T-cell (primary cell): ENCODE measurements at regions of chr3 and their contacts with region 1.

Region 1: GRCh38 chr3:10263646-10264363 is 15.5 kb downstream of the TATDN2 start:
- DNase-seq: peak; percentile 32 to 79 (median 64)
- ATAC-seq: peak; percentile 95 to 97 (median 96)
- H3K4me3 ChIP-seq: peak overlapping the region; percentile 11 to 23
- H3K4me3 Mint-ChIP-seq: peak overlapping the region; percentile 64 to 81 (median 78)
- H3K27ac ChIP-seq: peak overlapping the region; percentile 40
- H3K27ac Mint-ChIP-seq: peak overlapping the region; percentile 94 to 97
- H3K4me1 ChIP-seq: peaks cover 28 to 57% of the 10 kb centered on the region in 2 experiments
- H3K4me1 Mint-ChIP-seq: peaks cover 86 to 90% (median 87%) of the 10 kb centered on the region in 3 donors
- H3K27me3 ChIP-seq: no peaks in the 10 kb centered on the region
- H3K27me3 Mint-ChIP-seq: no peaks in the 10 kb centered on the region

Region 2: DNA sequence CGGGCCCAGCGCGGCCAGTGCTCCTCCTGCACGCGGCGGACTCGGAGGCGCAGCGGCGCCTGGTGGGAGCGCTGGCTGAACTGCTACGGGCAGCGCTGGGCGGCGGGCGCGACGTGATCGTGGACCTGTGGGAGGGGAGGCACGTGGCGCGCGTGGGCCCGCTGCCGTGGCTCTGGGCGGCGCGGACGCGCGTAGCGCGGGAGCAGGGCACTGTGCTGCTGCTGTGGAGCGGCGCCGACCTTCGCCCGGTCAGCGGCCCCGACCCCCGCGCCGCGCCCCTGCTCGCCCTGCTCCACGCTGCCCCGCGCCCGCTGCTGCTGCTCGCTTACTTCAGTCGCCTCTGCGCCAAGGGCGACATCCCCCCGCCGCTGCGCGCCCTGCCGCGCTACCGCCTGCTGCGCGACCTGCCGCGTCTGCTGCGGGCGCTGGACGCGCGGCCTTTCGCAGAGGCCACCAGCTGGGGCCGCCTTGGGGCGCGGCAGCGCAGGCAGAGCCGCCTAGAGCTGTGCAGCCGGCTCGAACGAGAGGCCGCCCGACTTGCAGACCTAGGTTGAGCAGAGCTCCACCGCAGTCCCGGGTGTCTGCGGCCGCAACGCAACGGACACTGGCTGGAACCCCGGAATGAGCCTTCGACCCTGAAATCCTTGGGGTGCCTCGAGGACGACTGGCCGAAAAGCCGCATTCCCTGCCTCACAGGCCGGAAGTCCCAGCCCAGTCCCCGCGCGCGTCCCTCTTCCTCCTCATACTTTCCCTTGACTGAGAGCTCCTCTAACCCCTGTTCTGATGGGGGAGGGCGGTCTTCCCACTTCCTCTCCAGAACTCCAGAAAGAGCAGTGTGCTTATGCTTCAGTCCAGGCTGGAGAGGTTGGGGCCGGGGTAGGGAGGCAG is 348.3 kb before region 1 on chr3:
- CTCF ChIA-PET with region 1: no interaction called
- POLR2A ChIA-PET with region 1: interaction called in 1 of 2 experiments, 13 read pairs
- DNase-seq: peak in 11 of 35 experiments; percentile 7 to 47 (median 23)
- ATAC-seq: peak; percentile 41 to 62 (median 58)
- H3K4me3 ChIP-seq: peak overlapping the region; percentile 51 to 83
- H3K4me3 Mint-ChIP-seq: peak overlapping the region; percentile 70 to 73 (median 71)
- H3K27ac ChIP-seq: no peak overlapping the region
- H3K27ac Mint-ChIP-seq: no peak overlapping the region
- H3K4me1 ChIP-seq: peaks cover 3 to 32% of the 10 kb centered on the region in 2 experiments
- H3K4me1 Mint-ChIP-seq: peaks cover 0 to 29% (median 19%) of the 10 kb centered on the region in 3 donors
- H3K27me3 ChIP-seq: peaks cover 0 to 29% of the 10 kb centered on the region in 2 experiments
- H3K27me3 Mint-ChIP-seq: no peaks in the 10 kb centered on the region

Region 3: GRCh38 chr3:10178892-10179291 is 84.9 kb before region 1 on chr3:
- CTCF ChIA-PET with region 1: no interaction called
- POLR2A ChIA-PET with region 1: interaction called, 7 to 11 read pairs
- DNase-seq: no peak
- ATAC-seq: no peak
- H3K4me3 ChIP-seq: no peak overlapping the region
- H3K4me3 Mint-ChIP-seq: no peak overlapping the region
- H3K27ac ChIP-seq: no peak overlapping the region
- H3K27ac Mint-ChIP-seq: peak overlapping the region; percentile 19 to 64
- H3K4me1 ChIP-seq: peaks cover 0 to 9% of the 10 kb centered on the region in 2 experiments
- H3K4me1 Mint-ChIP-seq: peaks cover 0 to 15% (median 12%) of the 10 kb centered on the region in 3 donors
- H3K27me3 ChIP-seq: peaks cover 0 to 2% of the 10 kb centered on the region in 2 experiments
- H3K27me3 Mint-ChIP-seq: no peaks in the 10 kb centered on the region

Region 4: GRCh38 chr3:10242182-10243065 is 21.4 kb before region 1 on chr3:
- CTCF ChIA-PET with region 1: interaction called, 4 to 20 read pairs
- POLR2A ChIA-PET with region 1: interaction called in 1 of 2 experiments, 9 read pairs
- DNase-seq: peak; percentile 41 to 88 (median 67)
- ATAC-seq: peak; percentile 91 to 99 (median 98)
- H3K4me3 ChIP-seq: peak overlapping the region; percentile 7 to 26
- H3K4me3 Mint-ChIP-seq: peak overlapping the region; percentile 57 to 77 (median 67)
- H3K27ac ChIP-seq: peak overlapping the region; percentile 72
- H3K27ac Mint-ChIP-seq: peak overlapping the region; percentile 84 to 90
- H3K4me1 ChIP-seq: peaks cover 41 to 57% of the 10 kb centered on the region in 2 experiments
- H3K4me1 Mint-ChIP-seq: peaks cover 50 to 55% (median 53%) of the 10 kb centered on the region in 3 donors
- H3K27me3 ChIP-seq: no peaks in the 10 kb centered on the region
- H3K27me3 Mint-ChIP-seq: no peaks in the 10 kb centered on the region

Region 5: GRCh38 chr3:10248184-10249080 is 15.4 kb before region 1 on chr3 and contains the start of gene TATDN2:
- CTCF ChIA-PET with region 1: interaction called in 1 of 2 experiments, 20 read pairs
- POLR2A ChIA-PET with region 1: interaction called, 7 to 9 read pairs
- DNase-seq: peak; percentile 82 to 97 (median 87)
- ATAC-seq: peak; percentile 94 to 97 (median 96)
- H3K4me3 ChIP-seq: peak within 1 kb of the TSS; percentile 96 to 99
- H3K4me3 Mint-ChIP-seq: peak within 1 kb of the TSS; percentile 92 to 99 (median 97)
- H3K27ac ChIP-seq: peak within 1 kb of the TSS; percentile 73
- H3K27ac Mint-ChIP-seq: peak within 1 kb of the TSS; percentile 93 to 97
- H3K4me1 ChIP-seq: peaks cover 23 to 53% of the 10 kb centered on the region in 2 experiments
- H3K4me1 Mint-ChIP-seq: peaks cover 51 to 58% (median 54%) of the 10 kb centered on the region in 3 donors
- H3K27me3 ChIP-seq: no peaks in the 10 kb centered on the region
- H3K27me3 Mint-ChIP-seq: no peaks in the 10 kb centered on the region
- total RNA-seq, gene TATDN2: 58.9 to 82.3 (median 79.9) TPM